ENCODE measurements at regions of chr12 and their contacts with region 1.

Region 1: GRCh38 chr12:6613776-6614512 is 6.8 kb upstream of the CHD4 start:
- DNase-seq: peak; percentile 94 to 97 (median 96)
- ATAC-seq: peak; percentile 91 to 93
- H3K4me3 ChIP-seq: no peak overlapping the region
- H3K27ac ChIP-seq: peak overlapping the region; percentile 94
- H3K4me1 ChIP-seq: peaks cover 19% of the 10 kb centered on the region
- H3K27me3 ChIP-seq: no peaks in the 10 kb centered on the region

Region 2: DNA sequence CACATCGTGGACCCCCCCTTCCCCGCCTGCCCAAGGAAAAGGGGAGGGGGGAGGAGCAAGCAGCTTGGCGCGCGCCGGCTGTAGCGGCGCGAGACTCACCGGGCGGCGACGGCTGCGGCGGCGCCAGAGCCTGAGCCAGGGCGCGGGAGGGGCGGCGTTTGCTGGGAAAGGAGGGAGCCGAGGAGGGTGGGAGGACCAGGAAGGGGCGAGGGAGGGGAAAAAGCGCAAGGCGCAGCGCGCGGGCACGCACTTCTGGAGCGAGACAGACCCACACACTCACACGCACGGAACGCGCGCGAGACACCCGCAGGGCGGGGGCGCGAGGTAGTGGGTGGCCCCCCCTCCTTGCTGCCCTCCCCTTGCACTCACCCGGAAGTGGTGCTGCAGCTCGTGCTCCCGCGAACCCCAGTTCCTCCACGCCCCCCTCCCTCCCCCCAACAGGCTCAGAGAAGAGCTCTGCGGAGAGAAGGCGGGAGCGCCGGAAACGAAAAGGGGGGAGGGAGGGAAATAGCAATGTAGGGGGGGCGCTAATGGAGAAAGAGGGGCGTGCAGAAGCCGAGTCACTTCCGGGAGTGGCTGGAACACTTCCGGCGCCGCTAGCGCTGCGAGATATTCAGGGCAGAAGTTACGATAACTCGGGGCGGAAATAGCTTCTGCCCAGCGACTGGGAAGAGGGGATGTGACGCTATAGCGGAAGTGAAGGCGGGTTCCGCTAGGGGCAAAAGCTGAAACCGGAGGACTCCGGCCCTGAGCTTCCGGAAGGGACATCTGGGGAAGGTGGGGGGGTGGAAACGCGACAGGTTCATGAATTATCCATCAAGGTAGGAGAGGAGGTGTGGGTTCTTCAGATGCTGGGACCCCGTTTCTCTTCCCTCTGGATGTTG is 75.3 kb after region 1 on chr12 and contains the start of gene ZNF384:
- intact Hi-C with region 1: loop called in 2 of 4 experiments (anchors 10 kb)
- DNase-seq: peak; percentile 97 to 98 (median 98)
- ATAC-seq: peak; percentile 94
- H3K4me3 ChIP-seq: peak within 1 kb of the TSS; percentile 92
- H3K27ac ChIP-seq: peak within 1 kb of the TSS; percentile 98
- H3K4me1 ChIP-seq: no peaks in the 10 kb centered on the region
- H3K27me3 ChIP-seq: no peaks in the 10 kb centered on the region
- total RNA-seq, gene ZNF384: 32.9 to 35.0 (median 33.8) TPM

Region 3: DNA sequence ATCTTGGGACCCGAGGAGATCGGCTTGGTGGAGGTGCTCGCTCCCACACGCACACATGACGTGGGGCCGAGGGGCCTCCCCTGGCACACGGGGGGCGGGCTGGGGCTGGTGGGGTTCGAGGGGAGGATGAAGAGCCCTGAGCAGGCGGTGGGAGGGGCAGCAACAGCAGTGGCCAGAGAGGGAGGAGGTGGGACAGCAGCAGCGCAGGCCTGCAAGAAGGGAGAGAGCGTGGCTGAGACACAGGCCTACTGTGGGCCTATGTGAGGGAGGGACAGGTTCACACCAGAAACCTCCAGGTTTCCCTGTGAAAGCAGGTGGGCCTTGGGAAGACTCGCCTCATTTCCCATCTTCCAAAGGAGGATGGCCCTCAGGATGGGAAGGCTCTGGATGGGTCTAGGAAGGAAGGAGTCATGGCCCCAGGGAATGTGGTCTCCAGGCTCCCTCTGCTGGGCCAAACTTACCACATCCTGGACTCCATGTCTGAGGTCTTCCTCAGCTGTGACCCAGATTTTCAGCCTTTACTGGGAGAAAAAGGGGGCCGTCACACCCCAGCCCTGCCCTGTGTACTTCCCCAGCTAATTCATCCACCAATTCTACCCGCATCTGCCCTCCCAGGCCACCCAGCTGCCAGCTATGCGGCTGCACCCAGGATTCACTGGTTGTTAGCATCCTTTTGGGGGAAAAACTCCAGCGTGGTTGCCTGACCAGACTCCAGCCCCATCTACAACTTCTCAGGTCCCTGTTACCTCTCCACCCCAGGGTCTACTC is 83.8 kb after region 1 on chr12:
- intact Hi-C with region 1: loop called in 1 of 4 experiments (anchors 10 kb)
- DNase-seq: no peak
- ATAC-seq: peak in 1 of 2 donors; percentile 42
- H3K4me3 ChIP-seq: no peak overlapping the region
- H3K27ac ChIP-seq: no peak overlapping the region
- H3K4me1 ChIP-seq: no peaks in the 10 kb centered on the region
- H3K27me3 ChIP-seq: no peaks in the 10 kb centered on the region

Region 4: DNA sequence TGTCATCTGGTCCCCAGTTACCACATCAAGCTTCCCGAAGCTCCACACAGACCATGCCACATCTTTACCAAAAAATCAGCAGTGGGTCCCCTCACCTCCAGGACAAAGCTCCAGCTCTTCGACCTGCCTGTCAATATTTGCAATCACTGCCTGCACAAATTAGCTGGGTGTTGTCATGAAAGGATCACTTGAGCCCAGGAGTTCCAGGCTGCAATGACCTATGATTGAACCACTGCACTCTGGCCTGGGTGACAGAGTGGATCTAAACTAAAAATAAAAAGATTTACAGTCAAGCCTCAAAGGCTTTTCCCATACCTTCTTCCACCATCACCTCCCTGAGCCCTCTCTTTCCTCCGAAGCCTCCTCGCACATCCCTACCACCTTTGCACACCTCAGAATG is 182.6 kb after region 1 on chr12:
- intact Hi-C with region 1: no loop called
- DNase-seq: no peak
- ATAC-seq: no peak
- H3K4me3 ChIP-seq: no peak overlapping the region
- H3K27ac ChIP-seq: no peak overlapping the region
- H3K4me1 ChIP-seq: no peaks in the 10 kb centered on the region
- H3K27me3 ChIP-seq: no peaks in the 10 kb centered on the region

Measured in right cardiac atrium (tissue), 5 donors.